ENCODE measurements at regions of chr6 and their contacts with region 1.

Region 1: DNA sequence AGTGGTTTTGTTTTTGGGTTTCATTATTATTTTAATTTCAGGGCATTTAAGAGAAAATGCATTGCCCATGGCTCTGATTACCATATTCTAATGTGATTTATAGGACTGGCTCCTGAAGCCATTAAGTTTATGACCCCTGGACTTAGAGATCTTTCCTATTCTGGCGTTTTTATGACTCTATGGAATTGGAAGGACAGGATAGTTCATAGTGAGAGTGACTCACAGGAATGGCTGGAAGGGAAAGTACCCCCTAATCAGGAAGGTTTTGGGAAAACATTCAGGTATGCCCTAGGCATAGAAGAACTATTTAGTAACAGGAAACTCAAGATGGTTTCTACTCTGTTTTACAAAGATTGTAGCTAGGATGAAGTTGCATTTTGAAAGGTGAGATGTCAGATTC is 108.6 kb upstream of the SLC2A12 start:
- DNase-seq: no peak
- H3K4me3 ChIP-seq: no peak overlapping the region
- H3K4me3 Mint-ChIP-seq: no peak overlapping the region
- H3K27ac ChIP-seq: no peak overlapping the region
- H3K27ac Mint-ChIP-seq: no peak overlapping the region
- H3K4me1 ChIP-seq: no peaks in the 10 kb centered on the region
- H3K4me1 Mint-ChIP-seq: peaks cover 2% of the 10 kb centered on the region
- H3K27me3 ChIP-seq: no peaks in the 10 kb centered on the region
- H3K27me3 Mint-ChIP-seq: peaks cover 4 to 5% (median 5%) of the 10 kb centered on the region in 3 donors
- CTCF ChIP-seq: no peak

Region 2: GRCh38 chr6:134111062-134111677 is 49.9 kb before region 1 on chr6:
- intact Hi-C with region 1: no loop called
- DNase-seq: peak; percentile 55 to 75 (median 74)
- H3K4me3 ChIP-seq: no peak overlapping the region
- H3K4me3 Mint-ChIP-seq: no peak overlapping the region
- H3K27ac ChIP-seq: no peak overlapping the region
- H3K27ac Mint-ChIP-seq: peak overlapping the region in 2 of 7 donors; percentile 42 to 61
- H3K4me1 ChIP-seq: peaks cover 14 to 18% of the 10 kb centered on the region in 2 donors
- H3K4me1 Mint-ChIP-seq: peaks cover 12% of the 10 kb centered on the region
- H3K27me3 ChIP-seq: peaks cover 0 to 12% of the 10 kb centered on the region in 2 donors
- H3K27me3 Mint-ChIP-seq: peaks cover 9 to 19% (median 14%) of the 10 kb centered on the region in 3 donors
- CTCF ChIP-seq: peak; percentile 99

Region 3: GRCh38 chr6:134822920-134823709 is 662.1 kb after region 1 on chr6:
- intact Hi-C with region 1: loop called (anchors 2 to 5 kb)
- DNase-seq: peak; percentile 71 to 88 (median 78)
- H3K4me3 ChIP-seq: no peak overlapping the region
- H3K4me3 Mint-ChIP-seq: no peak overlapping the region
- H3K27ac ChIP-seq: no peak overlapping the region
- H3K27ac Mint-ChIP-seq: peak overlapping the region in 2 of 7 donors; percentile 0 to 23
- H3K4me1 ChIP-seq: no peaks in the 10 kb centered on the region
- H3K4me1 Mint-ChIP-seq: peaks cover 6% of the 10 kb centered on the region
- H3K27me3 ChIP-seq: no peaks in the 10 kb centered on the region
- H3K27me3 Mint-ChIP-seq: peaks cover 0 to 2% (median 0%) of the 10 kb centered on the region in 3 donors
- CTCF ChIP-seq: peak; percentile 90

Region 4: DNA sequence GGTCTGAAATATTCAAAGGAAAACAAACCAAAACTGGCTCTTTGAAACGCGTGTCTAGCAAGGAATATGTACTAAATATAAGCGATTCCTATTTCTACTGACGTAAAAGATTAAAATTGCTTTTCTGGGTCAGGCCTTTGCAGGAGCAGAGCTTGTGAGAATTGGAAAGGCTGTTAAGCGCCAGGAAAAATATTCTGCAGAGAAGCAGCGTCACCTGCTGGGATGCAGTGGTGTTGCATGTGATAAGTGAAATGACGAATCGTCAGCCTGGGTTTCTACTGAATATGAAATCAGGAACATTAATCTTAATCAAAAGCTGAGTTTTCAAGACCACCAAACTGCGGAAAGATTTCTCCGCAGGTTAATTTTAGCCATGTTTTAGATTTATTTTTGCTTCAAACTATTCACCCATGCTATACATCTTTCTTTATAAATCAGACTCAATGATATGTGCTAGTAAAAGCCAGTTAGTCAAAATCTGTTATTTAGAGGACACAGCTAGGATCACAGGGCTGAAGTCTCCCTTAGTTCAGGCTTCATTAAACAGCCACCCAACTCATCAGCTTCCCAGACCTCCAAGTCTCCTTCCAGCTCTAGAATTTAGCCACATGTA is 721.5 kb after region 1 on chr6:
- intact Hi-C with region 1: loop called in 1 of 2 experiments (anchors 5 kb)
- DNase-seq: peak; percentile 44 to 64 (median 57)
- H3K4me3 ChIP-seq: no peak overlapping the region
- H3K4me3 Mint-ChIP-seq: no peak overlapping the region
- H3K27ac ChIP-seq: no peak overlapping the region
- H3K27ac Mint-ChIP-seq: peak overlapping the region in 1 of 7 donors; percentile 45
- H3K4me1 ChIP-seq: no peaks in the 10 kb centered on the region
- H3K4me1 Mint-ChIP-seq: peaks cover 8% of the 10 kb centered on the region
- H3K27me3 ChIP-seq: no peaks in the 10 kb centered on the region
- H3K27me3 Mint-ChIP-seq: peaks cover 0 to 4% (median 1%) of the 10 kb centered on the region in 3 donors
- CTCF ChIP-seq: peak; percentile 91

Region 5: DNA sequence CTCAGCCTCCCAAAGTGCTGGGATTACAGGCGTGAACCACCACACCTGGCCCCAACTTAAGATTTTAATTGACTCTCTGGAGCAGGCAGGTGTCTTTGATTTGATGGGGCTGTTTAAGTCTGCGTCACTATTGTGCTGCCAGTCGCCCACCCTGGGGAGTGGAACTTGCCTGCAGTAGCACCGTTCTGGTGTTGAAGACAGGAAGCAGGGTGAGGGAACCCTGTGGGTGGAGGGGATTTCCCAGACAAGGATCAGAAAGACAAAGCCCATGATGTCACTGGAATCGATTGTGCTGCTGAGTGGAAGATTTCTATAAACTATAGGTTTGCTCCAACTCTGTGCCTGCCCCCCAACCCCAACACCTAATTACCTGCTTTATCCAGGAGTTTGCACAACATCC is 777.9 kb after region 1 on chr6:
- intact Hi-C with region 1: loop called (anchors 2 to 10 kb)
- DNase-seq: no peak
- H3K4me3 ChIP-seq: no peak overlapping the region
- H3K4me3 Mint-ChIP-seq: no peak overlapping the region
- H3K27ac ChIP-seq: no peak overlapping the region
- H3K27ac Mint-ChIP-seq: no peak overlapping the region
- H3K4me1 ChIP-seq: no peaks in the 10 kb centered on the region
- H3K4me1 Mint-ChIP-seq: no peaks in the 10 kb centered on the region
- H3K27me3 ChIP-seq: no peaks in the 10 kb centered on the region
- H3K27me3 Mint-ChIP-seq: peaks cover 0 to 1% (median 0%) of the 10 kb centered on the region in 3 donors
- CTCF ChIP-seq: no peak

Measured in CD14-positive monocyte (primary cell).